ENCODE measurements at regions of chr10 and their contacts with region 1.

Region 1: GRCh38 chr10:88932539-88933256 is 19.9 kb downstream of the ACTA2 start:
- DNase-seq: peak; percentile 85
- H3K4me3 ChIP-seq: no peak overlapping the region
- H3K27ac ChIP-seq: no peak overlapping the region
- H3K4me1 ChIP-seq: peaks cover 32% of the 10 kb centered on the region
- CTCF ChIP-seq: peak; percentile 94

Region 2: GRCh38 chr10:87705346-87705745 is 1227.4 kb before region 1 on chr10:
- CTCF ChIA-PET with region 1: no interaction called
- POLR2A ChIA-PET with region 1: no interaction called
- intact Hi-C with region 1: no loop called
- DNase-seq: no peak
- H3K4me3 ChIP-seq: no peak overlapping the region
- H3K27ac ChIP-seq: no peak overlapping the region
- H3K4me1 ChIP-seq: no peaks in the 10 kb centered on the region
- CTCF ChIP-seq: no peak

Region 3: DNA sequence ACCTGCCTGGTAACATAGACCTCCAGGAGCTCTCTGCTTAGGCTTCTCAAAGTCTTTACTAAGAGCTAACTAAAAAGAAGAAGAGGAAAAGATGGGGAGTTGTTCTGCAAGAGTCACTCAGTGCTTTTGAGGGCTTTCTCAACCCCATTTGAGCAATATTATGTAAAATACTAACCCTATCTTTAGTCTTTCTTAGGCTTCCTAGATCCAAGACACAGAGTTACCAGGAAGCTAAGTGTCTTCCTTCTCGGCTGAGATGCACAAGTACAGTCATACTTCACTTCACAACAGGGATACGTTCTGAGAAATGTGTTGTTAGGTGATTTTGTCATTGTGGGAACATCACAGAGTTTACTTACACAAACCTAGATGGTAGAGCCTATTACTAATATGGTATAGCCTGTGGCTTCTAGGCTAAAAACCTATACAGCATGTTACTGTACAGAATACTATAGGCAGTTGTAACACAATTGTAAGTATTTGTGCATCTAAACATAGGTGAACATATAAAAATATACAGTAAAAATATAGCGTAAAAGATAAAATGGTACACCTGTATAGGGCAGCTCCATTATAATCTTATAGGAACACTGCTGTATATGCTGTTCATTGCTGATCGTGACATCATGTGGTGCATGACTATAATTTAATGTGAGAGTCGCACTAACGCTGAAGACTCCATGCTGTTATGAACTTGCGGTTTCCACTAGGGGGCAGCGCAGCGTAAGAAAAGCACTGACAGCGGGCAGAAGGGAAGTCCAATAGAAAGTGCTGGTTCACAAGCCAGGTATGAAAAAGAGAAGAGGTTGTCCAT is 97.4 kb before region 1 on chr10:
- CTCF ChIA-PET with region 1: interaction called, 68 read pairs
- POLR2A ChIA-PET with region 1: interaction called, 53 read pairs
- intact Hi-C with region 1: loop called (anchors 1 kb)
- DNase-seq: peak; percentile 88
- H3K4me3 ChIP-seq: no peak overlapping the region
- H3K27ac ChIP-seq: no peak overlapping the region
- H3K4me1 ChIP-seq: peaks cover 15% of the 10 kb centered on the region
- CTCF ChIP-seq: peak; percentile 99

Region 4: DNA sequence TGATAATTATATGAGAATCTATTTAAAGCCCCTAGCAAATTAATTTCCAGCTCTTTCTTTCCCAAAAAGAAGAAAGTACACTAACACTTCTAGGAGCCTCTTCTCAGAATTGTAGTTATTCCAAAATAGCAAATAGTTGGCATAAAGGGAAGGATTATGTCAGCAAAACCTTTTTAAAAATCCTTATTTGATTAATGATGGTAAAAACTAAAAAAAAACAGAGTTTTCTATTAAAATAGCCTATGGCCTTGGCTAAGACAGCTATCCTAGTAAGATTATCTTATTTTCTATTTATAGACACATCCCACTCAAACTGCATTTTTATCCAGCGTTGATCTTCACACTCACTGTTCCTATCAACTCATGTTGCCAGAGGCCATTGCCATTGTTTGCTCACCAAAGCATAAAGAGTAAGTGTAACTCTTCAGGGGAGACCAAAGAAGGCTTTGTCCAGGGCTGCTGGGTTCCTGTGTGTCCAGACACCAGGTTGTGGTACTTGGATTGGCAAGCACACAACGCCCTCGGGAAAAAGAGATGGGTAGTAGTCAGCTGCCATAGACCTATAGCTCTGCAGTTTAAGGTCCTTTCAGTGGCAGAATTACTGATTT is 11.6 kb before region 1 on chr10:
- CTCF ChIA-PET with region 1: no interaction called
- POLR2A ChIA-PET with region 1: no interaction called
- intact Hi-C with region 1: no loop called
- DNase-seq: no peak
- H3K4me3 ChIP-seq: no peak overlapping the region
- H3K27ac ChIP-seq: no peak overlapping the region
- H3K4me1 ChIP-seq: no peaks in the 10 kb centered on the region
- CTCF ChIP-seq: no peak

Region 5: DNA sequence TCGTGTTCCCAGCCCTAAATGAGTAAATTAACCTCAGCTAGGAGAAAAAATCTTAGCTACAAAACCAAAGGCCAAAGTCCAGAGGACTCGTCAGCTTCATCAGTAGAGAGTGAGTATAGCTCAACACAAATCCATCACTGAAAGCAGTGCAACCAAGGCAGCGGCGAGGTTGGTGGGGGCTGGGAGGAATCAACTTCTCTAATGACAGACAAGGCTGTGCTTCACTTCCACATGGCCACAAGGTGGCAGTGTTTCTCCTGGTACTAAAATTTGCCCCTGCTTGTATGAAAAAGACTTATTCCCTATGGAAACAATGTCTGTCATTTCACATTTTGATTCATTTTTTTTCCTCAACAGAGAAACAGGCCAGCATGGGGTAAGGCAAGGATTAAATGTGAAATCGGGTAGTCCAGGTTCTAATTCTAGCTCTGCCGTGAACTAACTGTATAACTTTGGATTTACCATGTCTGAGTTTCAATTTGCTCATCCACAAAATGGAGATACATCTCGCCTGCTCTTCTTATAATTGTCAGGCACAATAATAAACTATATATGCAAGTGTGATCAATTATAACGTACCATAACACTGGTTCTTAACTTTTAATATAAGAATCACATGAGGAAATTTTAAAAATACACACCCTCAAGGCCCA is 97.2 kb after region 1 on chr10:
- CTCF ChIA-PET with region 1: no interaction called
- POLR2A ChIA-PET with region 1: no interaction called
- intact Hi-C with region 1: loop called (anchors 2 kb)
- DNase-seq: peak; percentile 77
- H3K4me3 ChIP-seq: no peak overlapping the region
- H3K27ac ChIP-seq: no peak overlapping the region
- H3K4me1 ChIP-seq: no peaks in the 10 kb centered on the region
- CTCF ChIP-seq: peak; percentile 94

Region 6: GRCh38 chr10:89047397-89047796 is 114.7 kb after region 1 on chr10:
- CTCF ChIA-PET with region 1: no interaction called
- POLR2A ChIA-PET with region 1: no interaction called
- intact Hi-C with region 1: no loop called
- DNase-seq: no peak
- H3K4me3 ChIP-seq: no peak overlapping the region
- H3K27ac ChIP-seq: no peak overlapping the region
- H3K4me1 ChIP-seq: no peaks in the 10 kb centered on the region
- CTCF ChIP-seq: no peak

Region 7: DNA sequence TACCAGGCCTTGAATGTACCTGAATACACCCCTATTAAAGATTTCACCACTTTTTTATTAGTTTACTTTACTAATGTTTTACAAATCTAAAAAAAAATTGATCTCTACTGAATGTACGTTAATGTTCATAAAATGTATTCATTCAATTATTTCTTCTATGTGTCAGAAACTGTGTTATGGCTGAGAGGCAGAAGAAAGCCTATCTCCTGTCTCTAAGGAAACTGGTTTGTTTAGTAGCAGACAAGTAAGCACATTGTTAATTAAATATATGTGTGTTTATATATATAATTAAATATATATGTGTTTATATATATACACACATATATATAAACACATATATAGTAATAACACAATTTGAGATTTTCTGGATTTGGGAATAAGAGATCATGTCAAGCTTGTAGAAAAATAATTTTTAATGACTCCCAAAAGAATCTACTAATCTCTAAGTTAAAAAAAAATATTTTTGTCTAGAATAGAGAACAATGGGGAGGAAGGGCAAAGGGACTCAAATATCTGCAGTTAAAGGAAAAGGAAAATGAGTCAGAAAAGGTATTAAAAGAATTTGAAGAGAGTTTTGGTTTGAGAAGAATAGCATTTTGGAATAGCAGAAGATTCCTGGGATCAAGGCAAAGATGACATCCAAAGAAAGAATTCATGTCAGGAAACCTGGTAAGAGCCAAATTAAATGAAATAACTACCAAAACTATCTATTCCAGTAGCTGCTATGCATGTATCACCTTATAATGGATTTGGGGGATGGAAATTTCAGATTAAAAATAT is 182.3 kb after region 1 on chr10:
- CTCF ChIA-PET with region 1: no interaction called
- POLR2A ChIA-PET with region 1: no interaction called
- intact Hi-C with region 1: loop called (anchors 5 kb)
- DNase-seq: no peak
- H3K4me3 ChIP-seq: no peak overlapping the region
- H3K27ac ChIP-seq: no peak overlapping the region
- H3K4me1 ChIP-seq: no peaks in the 10 kb centered on the region
- CTCF ChIP-seq: no peak

Region 8: DNA sequence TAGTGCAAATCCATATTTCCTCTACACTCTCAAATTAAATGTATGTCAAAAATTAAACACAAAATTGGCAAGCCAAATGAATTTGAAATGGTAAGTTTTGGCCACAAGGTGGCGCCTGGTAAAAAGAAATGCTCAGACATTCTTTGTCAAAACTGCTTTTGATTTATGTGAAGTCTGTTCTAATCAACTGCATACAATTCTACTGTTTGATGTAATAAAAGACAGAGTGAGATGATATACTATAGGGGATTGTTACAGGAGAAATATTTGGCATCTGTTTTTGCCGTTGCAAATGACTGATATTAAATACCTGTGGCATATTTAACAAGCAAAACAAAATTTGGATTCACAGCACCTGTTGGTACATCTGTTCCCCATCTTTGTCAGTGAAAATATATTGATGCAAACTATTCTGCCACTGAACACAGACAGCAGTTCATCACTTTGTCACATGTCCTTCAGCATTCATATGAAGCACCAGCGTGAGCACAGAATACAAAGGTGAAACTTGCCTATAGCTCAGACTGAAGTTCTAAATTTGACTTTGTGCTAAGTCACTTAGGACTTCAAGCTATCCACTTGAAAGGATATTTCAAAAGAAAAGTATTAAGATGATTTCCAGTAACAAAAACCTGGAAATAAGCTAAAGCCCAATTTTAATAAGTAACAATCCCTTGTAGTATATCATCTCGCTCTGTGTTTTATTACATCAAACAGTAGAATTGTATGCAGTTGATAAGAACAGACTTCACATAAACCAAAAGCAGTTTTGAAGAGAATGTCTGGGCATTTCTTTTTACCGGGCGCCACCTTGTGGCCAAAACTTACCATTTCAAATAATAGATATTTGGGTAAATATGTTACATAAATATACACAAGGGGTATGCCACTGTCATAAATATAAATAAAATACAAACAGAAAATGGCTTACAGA is 284.6 kb after region 1 on chr10:
- CTCF ChIA-PET with region 1: interaction called, 4 read pairs
- POLR2A ChIA-PET with region 1: no interaction called
- intact Hi-C with region 1: loop called (anchors 1 kb)
- DNase-seq: peak; percentile 70
- H3K4me3 ChIP-seq: no peak overlapping the region
- H3K27ac ChIP-seq: no peak overlapping the region
- H3K4me1 ChIP-seq: peaks cover 6% of the 10 kb centered on the region
- CTCF ChIP-seq: peak; percentile 89

Measured in OCI-LY7 (cell line).